ENCODE measurements at regions of chr3 and their contacts with region 1.

Region 1: GRCh38 chr3:137013955-137014688 is 56.3 kb downstream of the IL20RB start:
- DNase-seq: peak; percentile 93
- ATAC-seq: peak; percentile 95

Region 2: DNA sequence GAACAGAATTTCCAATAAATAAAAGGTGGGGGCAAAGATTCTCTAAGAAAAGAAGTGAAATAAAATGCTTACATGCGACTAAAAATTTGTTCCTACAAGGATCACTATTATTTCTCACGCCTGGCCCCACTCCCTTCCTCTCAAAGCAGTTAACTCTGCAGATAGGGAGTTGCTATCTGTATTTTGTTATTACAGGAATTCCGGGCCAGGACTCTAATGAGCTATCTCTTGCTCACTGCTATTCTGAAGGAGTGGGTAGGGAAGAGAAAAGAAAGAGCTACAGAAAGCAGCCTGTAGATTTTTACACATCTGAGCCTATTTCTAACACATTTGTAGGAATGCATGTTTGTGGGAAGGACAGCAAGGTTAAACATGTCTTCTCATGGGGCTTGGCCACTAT is 623.5 kb before region 1 on chr3:
- intact Hi-C with region 1: loop called (anchors 5 kb)
- DNase-seq: no peak
- ATAC-seq: no peak

Measured in Right ventricle myocardium inferior (tissue), 1 donor.